Naive thymus-derived CD8-positive, alpha-beta T cell (primary cell): ENCODE measurements at regions of chr12 and their contacts with region 1.

Region 1: DNA sequence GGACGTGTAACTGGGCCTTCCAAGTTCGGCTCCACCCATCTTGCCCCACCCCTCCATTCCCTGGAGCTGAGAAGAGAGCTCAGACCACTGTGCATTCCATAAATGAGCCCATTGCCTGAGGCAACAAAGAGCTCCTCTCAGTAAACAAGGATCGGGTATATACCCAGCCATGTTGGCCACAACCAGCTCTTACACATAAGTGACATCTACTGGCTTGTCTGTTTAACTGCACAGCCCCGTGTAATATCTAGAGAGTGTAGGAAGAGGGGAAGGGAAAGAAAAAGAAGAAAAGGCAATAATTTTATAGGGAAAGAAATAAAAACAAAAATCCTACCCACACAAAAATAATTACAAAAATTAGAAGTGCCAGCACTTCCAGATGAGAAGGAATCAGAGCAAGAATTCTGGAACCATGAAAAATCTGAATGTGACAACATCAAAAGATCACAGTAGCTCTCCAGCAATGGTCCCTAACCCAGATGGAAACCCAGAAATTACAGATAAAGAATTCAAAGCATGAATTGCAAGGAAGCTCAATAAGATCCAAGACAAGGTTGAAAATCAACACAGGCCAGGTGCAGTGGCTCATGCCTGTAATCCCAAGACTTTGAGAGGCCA is 308.1 kb downstream of the RPAP3 start:
- DNase-seq: peak in 8 of 10 donors; percentile 18 to 81 (median 49)
- ATAC-seq: peak; percentile 85 to 93
- H3K4me3 Mint-ChIP-seq: peak overlapping the region in 7 of 10 donors; percentile 20 to 79 (median 70)
- H3K27ac Mint-ChIP-seq: peak overlapping the region; percentile 84 to 97 (median 92)
- H3K4me1 Mint-ChIP-seq: peaks cover 20 to 72% (median 53%) of the 10 kb centered on the region in 4 donors
- H3K27me3 Mint-ChIP-seq: no peaks in the 10 kb centered on the region

Region 2: GRCh38 chr12:47079468-47079980 is 318.2 kb before region 1 on chr12 and contains the starts of genes AMIGO2 and PCED1B:
- POLR2A ChIA-PET with region 1: interaction called, 33 read pairs
- DNase-seq: peak; percentile 45 to 78 (median 52)
- ATAC-seq: peak; percentile 56 to 60
- H3K4me3 Mint-ChIP-seq: peak within 1 kb of the TSS; percentile 92 to 99 (median 98)
- H3K27ac Mint-ChIP-seq: peak within 1 kb of the TSS; percentile 92 to 100 (median 96)
- H3K4me1 Mint-ChIP-seq: peaks cover 38 to 88% (median 77%) of the 10 kb centered on the region in 4 donors
- H3K27me3 Mint-ChIP-seq: no peaks in the 10 kb centered on the region
- polyA plus RNA-seq, gene AMIGO2: 28.6 to 53.3 (median 41.1) TPM
- polyA plus RNA-seq, gene PCED1B: 54.9 to 163 (median 127) TPM

Region 3: GRCh38 chr12:47207340-47207717 is 190.4 kb before region 1 on chr12:
- POLR2A ChIA-PET with region 1: interaction called, 18 read pairs
- DNase-seq: peak in 8 of 10 donors; percentile 18 to 70 (median 40)
- ATAC-seq: peak; percentile 41 to 59
- H3K4me3 Mint-ChIP-seq: peak overlapping the region; percentile 62 to 98 (median 86)
- H3K27ac Mint-ChIP-seq: peak overlapping the region; percentile 83 to 99 (median 91)
- H3K4me1 Mint-ChIP-seq: peaks cover 45 to 87% (median 83%) of the 10 kb centered on the region in 4 donors
- H3K27me3 Mint-ChIP-seq: no peaks in the 10 kb centered on the region

Region 4: GRCh38 chr12:47276621-47277309 is 121.0 kb before region 1 on chr12:
- POLR2A ChIA-PET with region 1: interaction called, 13 read pairs
- DNase-seq: peak; percentile 8 to 87 (median 68)
- ATAC-seq: peak; percentile 92 to 99
- H3K4me3 Mint-ChIP-seq: peak overlapping the region; percentile 16 to 80 (median 72)
- H3K27ac Mint-ChIP-seq: peak overlapping the region; percentile 88 to 96 (median 92)
- H3K4me1 Mint-ChIP-seq: peaks cover 33 to 84% (median 81%) of the 10 kb centered on the region in 4 donors
- H3K27me3 Mint-ChIP-seq: no peaks in the 10 kb centered on the region

Region 5: DNA sequence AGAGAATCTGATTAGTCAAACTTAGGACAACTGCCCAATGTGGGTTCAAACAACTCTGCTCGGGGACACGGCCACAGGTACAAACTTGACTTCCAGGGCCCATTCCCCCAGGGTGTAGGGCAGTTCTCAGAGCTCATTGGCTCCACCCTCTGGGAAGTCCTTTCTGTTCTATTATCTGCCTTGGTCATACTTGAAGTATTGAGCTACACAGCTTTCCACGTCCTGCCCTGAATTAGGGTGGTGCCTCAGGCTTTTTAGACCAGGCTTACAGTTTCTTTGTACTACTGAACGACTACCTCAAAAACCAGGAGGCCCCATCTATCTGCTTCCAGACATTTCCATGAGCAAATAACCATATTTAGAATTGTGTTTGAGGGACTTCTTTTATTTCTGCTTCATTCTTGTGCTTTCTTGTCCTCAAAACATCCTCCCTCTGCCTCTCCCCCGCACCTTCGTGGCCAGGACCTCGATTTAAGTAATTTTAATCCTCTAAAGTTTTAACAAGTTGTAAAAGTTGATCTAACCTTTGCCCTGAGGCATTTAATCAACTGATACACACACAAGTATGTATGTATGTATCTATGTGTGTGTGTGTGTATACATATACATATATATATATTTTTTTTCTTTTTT is 36.3 kb before region 1 on chr12:
- POLR2A ChIA-PET with region 1: interaction called, 19 read pairs
- DNase-seq: peak; percentile 2 to 62 (median 32)
- ATAC-seq: peak; percentile 54 to 55
- H3K4me3 Mint-ChIP-seq: peak overlapping the region; percentile 66 to 86 (median 80)
- H3K27ac Mint-ChIP-seq: peak overlapping the region in 9 of 10 donors; percentile 89 to 100 (median 98)
- H3K4me1 Mint-ChIP-seq: peaks cover 43 to 64% (median 58%) of the 10 kb centered on the region in 4 donors
- H3K27me3 Mint-ChIP-seq: no peaks in the 10 kb centered on the region